BJ (cell line): ENCODE measurements at regions of chr7 and their contacts with region 1.

Region 1: DNA sequence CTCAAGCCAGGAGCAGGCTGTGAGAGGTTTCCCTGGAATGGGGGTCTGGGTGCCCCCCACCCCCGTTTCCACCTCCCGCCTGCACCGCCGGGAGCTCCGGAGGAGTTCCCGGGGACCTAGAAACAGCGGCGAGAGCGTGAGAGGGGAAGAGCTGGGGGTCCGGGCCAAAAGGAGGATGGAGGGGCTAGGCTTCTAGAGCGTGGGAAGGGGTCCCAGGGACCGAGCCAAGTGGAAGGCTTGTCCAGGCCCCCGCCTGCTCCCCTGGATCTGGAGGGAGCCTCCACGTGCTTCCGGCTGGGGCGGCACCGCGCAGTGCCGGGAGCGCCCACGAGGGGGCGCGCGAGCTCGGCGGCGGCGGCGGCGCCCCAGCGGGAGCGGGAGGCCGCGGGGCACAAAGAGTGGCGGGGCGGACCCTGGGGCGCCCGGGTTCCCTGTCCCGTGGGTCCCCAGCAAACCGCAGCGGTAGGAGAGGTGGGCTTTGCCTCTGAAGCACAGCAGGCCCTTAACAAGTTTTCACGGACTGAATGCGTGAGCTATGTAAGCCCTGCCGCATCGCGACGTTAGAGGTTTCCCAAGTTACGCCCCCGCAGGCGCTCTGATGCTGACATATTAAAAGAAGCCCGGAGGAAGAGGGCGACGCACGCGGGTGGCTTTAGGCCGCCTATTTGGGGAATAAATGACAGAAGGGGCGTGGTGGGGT is 104.4 kb upstream of the LRRC4 start:
- DNase-seq: no peak
- H3K4me3 ChIP-seq: peak overlapping the region; percentile 49
- H3K27me3 ChIP-seq: peaks cover 17% of the 10 kb centered on the region
- CTCF ChIP-seq: peak; percentile 66

Region 2: DNA sequence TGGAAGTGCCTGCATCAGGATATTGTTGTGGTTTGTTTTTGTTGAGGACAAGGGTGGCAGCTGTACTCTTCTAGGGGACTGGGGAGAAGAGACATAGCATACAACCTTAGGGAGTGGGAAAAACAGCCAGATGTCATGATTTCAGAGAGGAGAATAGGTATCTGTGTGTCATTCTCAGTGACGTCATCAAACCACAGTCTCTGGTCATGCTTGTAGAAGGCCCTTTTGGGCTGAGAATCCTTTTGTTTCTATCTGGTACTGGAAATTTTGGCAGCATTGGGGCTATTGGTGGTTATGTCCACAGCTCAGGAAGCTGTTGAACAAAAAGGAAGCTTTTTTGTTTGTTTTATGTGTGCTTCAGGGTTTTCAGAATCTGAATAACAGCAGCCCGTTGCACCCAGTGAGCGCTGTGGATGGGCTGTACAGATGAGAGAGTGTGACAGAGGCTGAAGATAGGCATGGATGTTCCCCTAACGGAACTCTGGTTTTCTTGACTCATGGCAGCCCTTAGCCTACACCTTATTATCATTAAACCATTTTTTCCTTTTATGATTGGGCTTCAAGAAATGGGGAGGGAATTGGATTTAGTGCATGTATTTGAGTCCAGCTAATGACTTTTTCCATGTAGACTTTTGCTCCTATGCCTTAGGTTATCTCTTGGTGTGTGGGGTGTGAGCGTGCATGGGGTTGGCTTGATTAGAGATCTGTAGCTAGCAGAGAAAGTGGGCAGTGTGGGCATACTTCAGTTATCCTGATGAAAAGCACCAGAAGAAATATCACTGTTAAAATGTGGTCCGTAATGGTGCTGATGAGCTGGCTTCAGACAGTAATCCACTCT is 417.9 kb before region 1 on chr7:
- CTCF ChIA-PET with region 1: no interaction called
- POLR2A ChIA-PET with region 1: no interaction called
- DNase-seq: no peak
- H3K4me3 ChIP-seq: no peak overlapping the region
- H3K27me3 ChIP-seq: no peaks in the 10 kb centered on the region
- CTCF ChIP-seq: no peak

Region 3: DNA sequence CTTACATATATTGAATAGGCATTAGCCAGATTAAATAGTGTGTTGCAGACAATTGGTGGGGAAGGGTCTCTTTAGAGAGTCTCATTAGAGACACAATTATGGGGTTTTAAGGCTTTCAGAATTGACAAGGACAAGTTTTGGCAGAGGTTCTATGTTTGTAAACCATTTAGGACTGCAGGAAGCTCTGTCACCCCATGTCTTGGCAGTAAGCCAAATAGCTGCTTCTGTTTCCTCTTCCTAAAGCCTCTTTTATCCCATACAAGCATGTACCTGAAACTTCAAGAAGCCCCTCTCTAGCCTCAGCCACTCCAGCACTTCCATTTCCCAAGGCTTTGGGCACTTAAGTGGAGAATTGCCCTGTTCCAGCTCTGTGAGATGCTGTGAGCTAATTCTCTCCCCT is 82.6 kb before region 1 on chr7:
- CTCF ChIA-PET with region 1: no interaction called
- POLR2A ChIA-PET with region 1: no interaction called
- DNase-seq: no peak
- H3K4me3 ChIP-seq: no peak overlapping the region
- H3K27me3 ChIP-seq: no peaks in the 10 kb centered on the region
- CTCF ChIP-seq: no peak

Region 4: GRCh38 chr7:128122576-128123290 is 12.9 kb before region 1 on chr7:
- CTCF ChIA-PET with region 1: interaction called, 26 read pairs
- POLR2A ChIA-PET with region 1: no interaction called
- DNase-seq: no peak
- H3K4me3 ChIP-seq: no peak overlapping the region
- H3K27me3 ChIP-seq: peaks cover 19% of the 10 kb centered on the region
- CTCF ChIP-seq: no peak

Region 5: GRCh38 chr7:128167042-128167691 is 31.5 kb after region 1 on chr7:
- CTCF ChIA-PET with region 1: interaction called, 20 read pairs
- POLR2A ChIA-PET with region 1: no interaction called
- DNase-seq: no peak
- H3K4me3 ChIP-seq: peak overlapping the region; percentile 19
- H3K27me3 ChIP-seq: peaks cover 53% of the 10 kb centered on the region
- CTCF ChIP-seq: no peak

Region 6: GRCh38 chr7:128209229-128210035 is 73.8 kb after region 1 on chr7:
- CTCF ChIA-PET with region 1: interaction called, 94 read pairs
- POLR2A ChIA-PET with region 1: no interaction called
- DNase-seq: no peak
- H3K4me3 ChIP-seq: no peak overlapping the region
- H3K27me3 ChIP-seq: peaks cover 15% of the 10 kb centered on the region
- CTCF ChIP-seq: peak; percentile 97

Region 7: DNA sequence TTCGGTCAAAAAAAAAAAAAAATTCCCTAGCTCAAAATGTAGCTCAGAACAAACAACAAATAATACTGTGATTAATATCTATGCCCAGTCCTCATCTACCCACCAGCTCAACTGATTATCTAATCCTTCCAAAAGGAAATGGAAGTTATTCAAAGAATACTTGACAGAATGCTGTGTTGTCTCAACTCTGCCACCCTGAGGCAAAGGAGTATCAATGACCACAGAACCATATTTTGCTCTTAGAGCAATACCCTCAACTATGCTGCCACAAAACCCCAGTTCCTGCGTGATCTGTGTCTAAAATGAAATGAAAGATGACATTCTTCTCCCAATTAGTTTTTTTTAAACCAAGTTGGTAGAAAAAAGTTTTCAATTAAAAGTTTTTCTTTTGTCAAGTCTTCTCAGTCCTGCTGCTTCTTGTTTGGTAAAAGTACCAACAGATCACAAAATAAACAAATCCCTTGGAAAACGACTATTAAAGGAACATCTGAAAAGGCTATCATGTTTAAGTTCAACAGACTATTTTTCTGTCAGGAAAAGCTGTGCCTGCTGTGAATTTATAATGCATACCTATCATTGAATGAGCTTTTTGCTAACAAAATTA is 186.5 kb after region 1 on chr7:
- CTCF ChIA-PET with region 1: interaction called, 15 read pairs
- POLR2A ChIA-PET with region 1: no interaction called
- DNase-seq: no peak
- H3K4me3 ChIP-seq: no peak overlapping the region
- H3K27me3 ChIP-seq: no peaks in the 10 kb centered on the region
- CTCF ChIP-seq: peak; percentile 67